Colonic mucosa (tissue), 4 donors: ENCODE measurements at regions of chr4 and their contacts with region 1.

Region 1: DNA sequence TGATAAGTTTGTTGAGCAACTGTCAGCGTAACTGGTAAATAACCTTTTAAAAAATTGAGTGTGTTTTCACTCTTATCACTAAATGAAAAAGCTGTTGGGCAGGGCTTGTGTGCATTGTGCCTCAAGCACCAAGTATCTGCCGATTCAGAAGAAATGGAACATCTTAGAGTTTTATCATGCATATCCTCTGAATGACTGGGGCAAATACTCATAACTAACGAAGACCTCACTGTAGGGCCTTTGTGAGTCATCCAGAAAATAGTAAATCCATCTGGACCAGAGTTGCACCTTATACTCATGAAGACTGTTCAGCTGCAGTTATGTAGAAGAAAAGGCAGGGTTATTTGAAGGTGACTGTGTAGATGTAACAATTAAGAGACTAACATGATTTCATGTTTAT is 222.1 kb downstream of the CAMK2D start:
- DNase-seq: no peak
- H3K4me3 ChIP-seq: no peak overlapping the region
- H3K27ac ChIP-seq: no peak overlapping the region
- H3K4me1 ChIP-seq: no peaks in the 10 kb centered on the region
- H3K27me3 ChIP-seq: no peaks in the 10 kb centered on the region
- CTCF ChIP-seq: no peak

Region 2: DNA sequence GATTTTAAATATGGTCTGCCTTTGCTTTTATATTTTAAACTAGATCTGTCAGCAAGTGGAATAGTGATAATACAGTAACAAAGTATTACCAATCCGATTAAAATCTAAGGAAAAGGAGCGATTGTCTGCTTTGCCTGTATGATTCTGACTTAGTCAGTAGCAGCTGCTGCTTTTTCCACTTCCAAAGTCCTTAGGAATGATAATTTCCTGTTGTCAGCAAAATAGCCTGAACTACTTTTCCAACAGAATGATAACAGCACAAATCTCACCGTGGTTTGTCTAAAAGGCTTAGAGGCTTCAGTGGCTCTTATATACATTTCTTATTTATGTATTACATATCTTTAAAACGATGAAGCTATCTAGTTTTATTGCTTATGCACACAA is 200.0 kb before region 1 on chr4:
- intact Hi-C with region 1: no loop called
- DNase-seq: no peak
- H3K4me3 ChIP-seq: no peak overlapping the region
- H3K27ac ChIP-seq: no peak overlapping the region
- H3K4me1 ChIP-seq: no peaks in the 10 kb centered on the region
- H3K27me3 ChIP-seq: no peaks in the 10 kb centered on the region
- CTCF ChIP-seq: no peak

Region 3: DNA sequence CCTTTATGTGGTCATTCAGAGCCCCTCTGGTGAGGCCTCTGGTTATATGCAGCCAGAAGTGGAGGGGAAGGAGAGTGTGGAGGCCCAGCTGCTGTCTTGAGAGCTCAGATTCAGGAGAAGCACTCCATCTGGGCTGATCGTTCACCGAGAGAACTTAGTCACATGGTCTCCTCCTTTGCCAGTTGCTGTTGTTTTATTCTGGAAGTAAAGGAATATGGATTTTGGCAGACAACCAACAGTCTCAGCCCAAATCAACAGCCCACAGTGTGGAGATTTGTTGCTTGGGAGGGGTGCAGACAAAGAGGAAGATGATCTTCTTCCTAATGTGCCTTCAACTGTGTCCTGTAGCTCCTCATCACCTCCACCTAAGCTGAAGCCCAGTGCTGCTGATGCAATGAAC is 134.6 kb before region 1 on chr4:
- intact Hi-C with region 1: loop called (anchors 10 kb)
- DNase-seq: no peak
- H3K4me3 ChIP-seq: no peak overlapping the region
- H3K27ac ChIP-seq: no peak overlapping the region
- H3K4me1 ChIP-seq: no peaks in the 10 kb centered on the region
- H3K27me3 ChIP-seq: no peaks in the 10 kb centered on the region
- CTCF ChIP-seq: no peak

Region 4: GRCh38 chr4:114717432-114717831 is 1178.0 kb after region 1 on chr4:
- intact Hi-C with region 1: no loop called
- DNase-seq: no peak
- H3K4me3 ChIP-seq: no peak overlapping the region
- H3K27ac ChIP-seq: no peak overlapping the region
- H3K4me1 ChIP-seq: no peaks in the 10 kb centered on the region
- H3K27me3 ChIP-seq: no peaks in the 10 kb centered on the region
- CTCF ChIP-seq: no peak